Caco-2 (cell line): ENCODE measurements at regions of chr10 and their contacts with region 1.

Region 1: DNA sequence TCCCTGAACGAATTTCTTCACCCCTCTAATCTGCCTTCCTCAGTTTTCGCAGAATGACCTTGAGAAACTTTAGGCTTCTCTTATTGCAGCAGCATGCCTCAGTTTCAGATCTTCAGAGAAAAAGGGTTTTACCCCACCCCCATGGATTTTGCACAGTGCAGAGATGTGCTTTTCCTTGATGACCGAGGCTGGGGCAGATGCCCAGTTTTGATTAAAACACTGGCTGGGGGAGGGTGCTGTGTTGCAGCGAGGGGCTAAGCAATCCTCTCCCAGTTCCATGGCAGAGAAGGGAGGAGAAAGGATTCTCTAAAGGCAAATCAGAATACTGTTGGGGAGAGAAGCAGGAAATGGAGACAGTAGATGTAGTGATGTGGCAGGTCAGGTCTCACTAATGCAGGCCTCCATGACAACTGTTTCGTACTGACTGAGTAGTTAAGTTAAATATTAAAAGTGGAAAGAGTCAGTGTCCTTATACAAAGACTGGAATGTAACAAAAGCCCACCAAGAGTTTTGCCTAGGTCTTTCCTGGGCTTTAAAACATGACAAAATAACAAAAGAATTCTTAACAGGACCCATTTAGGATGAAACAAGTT is 50.8 kb upstream of the PDZD8 start:
- DNase-seq: peak in 1 of 2 experiments; percentile 30
- H3K4me3 ChIP-seq: no peak overlapping the region
- H3K4me3 Mint-ChIP-seq: peak overlapping the region; percentile 56
- H3K27ac Mint-ChIP-seq: peak overlapping the region; percentile 89
- H3K4me1 ChIP-seq: peaks cover 38% of the 10 kb centered on the region
- H3K4me1 Mint-ChIP-seq: peaks cover 21% of the 10 kb centered on the region
- H3K27me3 ChIP-seq: no peaks in the 10 kb centered on the region
- H3K27me3 Mint-ChIP-seq: no peaks in the 10 kb centered on the region
- CTCF ChIP-seq: no peak

Region 2: GRCh38 chr10:116947842-116948529 is 478.1 kb before region 1 on chr10:
- CTCF ChIA-PET with region 1: no interaction called
- POLR2A ChIA-PET with region 1: no interaction called
- intact Hi-C with region 1: no loop called
- DNase-seq: peak in 1 of 2 experiments; percentile 21
- H3K4me3 ChIP-seq: no peak overlapping the region
- H3K4me3 Mint-ChIP-seq: no peak overlapping the region
- H3K27ac Mint-ChIP-seq: peak overlapping the region; percentile 42
- H3K4me1 ChIP-seq: peaks cover 18% of the 10 kb centered on the region
- H3K4me1 Mint-ChIP-seq: peaks cover 15% of the 10 kb centered on the region
- H3K27me3 ChIP-seq: no peaks in the 10 kb centered on the region
- H3K27me3 Mint-ChIP-seq: no peaks in the 10 kb centered on the region
- CTCF ChIP-seq: no peak

Region 3: DNA sequence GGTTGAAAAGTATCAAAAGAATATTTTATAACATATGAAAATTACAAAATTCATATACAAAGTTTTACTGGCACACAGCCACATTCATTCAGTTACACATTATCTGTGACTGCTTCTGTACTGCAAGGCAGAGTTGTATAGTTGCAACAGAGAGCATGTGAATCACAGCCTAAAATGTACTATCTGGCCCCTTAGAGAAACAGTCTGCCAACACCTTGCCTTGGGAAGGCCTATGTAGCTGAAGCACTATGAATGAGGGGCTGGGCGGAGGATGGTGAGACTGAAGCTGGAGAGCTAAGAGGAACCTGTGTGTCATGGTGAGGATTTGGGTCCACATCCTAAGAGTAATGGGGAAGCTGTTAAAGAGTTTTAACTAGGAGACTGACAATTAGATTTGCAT is 86.5 kb before region 1 on chr10:
- CTCF ChIA-PET with region 1: no interaction called
- POLR2A ChIA-PET with region 1: no interaction called
- intact Hi-C with region 1: loop called (anchors 10 kb)
- DNase-seq: no peak
- H3K4me3 ChIP-seq: no peak overlapping the region
- H3K4me3 Mint-ChIP-seq: no peak overlapping the region
- H3K27ac Mint-ChIP-seq: peak overlapping the region; percentile 24
- H3K4me1 ChIP-seq: no peaks in the 10 kb centered on the region
- H3K4me1 Mint-ChIP-seq: peaks cover 29% of the 10 kb centered on the region
- H3K27me3 ChIP-seq: no peaks in the 10 kb centered on the region
- H3K27me3 Mint-ChIP-seq: no peaks in the 10 kb centered on the region
- CTCF ChIP-seq: no peak